Colonic mucosa (tissue), 4 donors: ENCODE measurements at regions of chr13 and their contacts with region 1.

Region 1: GRCh38 chr13:21638319-21639282 is 32.3 kb upstream of the FGF9 start:
- DNase-seq: peak; percentile 51
- H3K4me3 ChIP-seq: no peak overlapping the region
- H3K27ac ChIP-seq: no peak overlapping the region
- H3K4me1 ChIP-seq: no peaks in the 10 kb centered on the region
- H3K27me3 ChIP-seq: no peaks in the 10 kb centered on the region
- CTCF ChIP-seq: peak; percentile 81

Region 2: GRCh38 chr13:21849323-21849722 is 210.7 kb after region 1 on chr13:
- intact Hi-C with region 1: loop called (anchors 10 kb)
- DNase-seq: no peak
- H3K4me3 ChIP-seq: no peak overlapping the region
- H3K27ac ChIP-seq: no peak overlapping the region
- H3K4me1 ChIP-seq: no peaks in the 10 kb centered on the region
- H3K27me3 ChIP-seq: no peaks in the 10 kb centered on the region
- CTCF ChIP-seq: peak; percentile 59

Region 3: DNA sequence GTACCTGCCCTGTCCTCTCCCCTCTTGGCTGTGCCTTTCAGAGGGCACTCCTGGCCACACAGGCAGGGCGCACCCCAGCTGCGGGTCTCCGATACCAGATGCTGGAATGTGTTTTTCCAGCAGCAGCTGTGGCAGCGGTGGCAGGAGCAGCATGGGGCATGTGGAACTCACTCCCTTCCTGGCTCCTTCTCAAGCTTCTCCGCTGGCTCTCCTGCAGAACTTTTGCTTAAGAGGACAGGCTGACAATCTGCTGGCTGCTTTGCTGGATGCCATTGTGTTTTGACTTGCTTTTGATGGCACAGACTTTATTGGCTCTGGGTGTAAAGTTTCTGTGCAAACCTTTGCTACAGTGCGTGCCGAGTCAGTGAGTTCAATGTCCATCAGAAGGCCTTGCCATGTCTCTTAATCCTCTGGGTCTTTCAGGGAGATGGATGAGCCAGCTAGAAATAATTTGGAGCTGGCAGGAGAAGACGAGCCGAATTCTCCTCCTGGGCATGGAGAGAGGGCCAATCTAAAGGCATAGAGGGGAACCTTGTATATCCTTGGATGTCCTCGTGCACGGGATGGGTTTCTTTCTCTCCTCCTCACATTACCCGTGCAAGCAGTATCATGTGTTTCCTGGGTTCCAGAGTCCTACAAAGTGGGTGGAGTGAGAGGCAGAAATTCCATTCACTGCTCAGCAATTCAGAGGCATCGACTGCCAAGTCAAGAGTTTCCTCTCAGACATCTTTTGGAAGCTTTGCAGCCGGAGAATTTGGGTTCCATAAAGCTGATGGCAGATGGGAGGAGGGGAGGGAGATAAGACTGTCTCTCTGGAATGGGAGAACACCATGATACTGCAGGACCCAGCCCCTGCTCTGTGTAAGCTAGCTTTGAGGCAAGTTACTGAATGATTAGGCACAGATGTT is 263.5 kb after region 1 on chr13:
- intact Hi-C with region 1: no loop called
- DNase-seq: no peak
- H3K4me3 ChIP-seq: no peak overlapping the region
- H3K27ac ChIP-seq: no peak overlapping the region
- H3K4me1 ChIP-seq: no peaks in the 10 kb centered on the region
- H3K27me3 ChIP-seq: no peaks in the 10 kb centered on the region
- CTCF ChIP-seq: no peak

Region 4: GRCh38 chr13:22103044-22104027 is 464.7 kb after region 1 on chr13:
- intact Hi-C with region 1: loop called (anchors 10 kb)
- DNase-seq: no peak
- H3K4me3 ChIP-seq: no peak overlapping the region
- H3K27ac ChIP-seq: no peak overlapping the region
- H3K4me1 ChIP-seq: no peaks in the 10 kb centered on the region
- H3K27me3 ChIP-seq: no peaks in the 10 kb centered on the region
- CTCF ChIP-seq: peak; percentile 33